ENCODE measurements at regions of chr10 and their contacts with region 1.

Region 1: DNA sequence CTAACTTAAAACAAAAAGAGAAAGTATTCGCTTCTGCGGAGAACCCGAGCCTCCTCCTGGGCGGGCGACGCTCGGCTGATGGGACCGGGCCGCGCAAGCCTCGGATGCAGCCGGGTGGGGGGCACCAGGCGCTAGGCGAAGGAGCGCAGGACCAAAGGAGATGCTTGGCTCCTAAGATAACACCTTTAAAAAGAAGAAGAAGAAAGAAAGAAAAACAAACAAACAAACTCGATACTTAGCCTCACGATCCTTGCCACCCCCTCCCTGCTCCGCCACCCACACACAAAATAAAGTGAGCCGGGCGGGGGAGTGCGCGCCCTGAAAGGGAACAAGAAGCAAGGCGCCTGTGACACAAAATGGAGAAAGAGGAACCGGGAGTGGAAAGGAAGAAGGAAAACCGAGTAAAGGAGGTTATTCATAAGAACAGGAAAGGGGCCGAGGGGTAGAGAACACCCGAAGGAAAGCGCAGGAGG is 34.0 kb upstream of the EBLN1 start:
- DNase-seq: peak in 8 of 9 donors; percentile 48 to 76 (median 73)
- ATAC-seq: peak; percentile 73
- H3K4me3 ChIP-seq: peak overlapping the region; percentile 82
- H3K4me3 Mint-ChIP-seq: peak overlapping the region; percentile 90 to 100 (median 94)
- H3K27ac ChIP-seq: peak overlapping the region; percentile 87
- H3K27ac Mint-ChIP-seq: peak overlapping the region; percentile 95 to 100 (median 99)
- H3K4me1 ChIP-seq: peaks cover 0 to 4% of the 10 kb centered on the region in 2 donors
- H3K4me1 Mint-ChIP-seq: peaks cover 8 to 40% (median 38%) of the 10 kb centered on the region in 7 donors
- H3K27me3 ChIP-seq: no peaks in the 10 kb centered on the region
- H3K27me3 Mint-ChIP-seq: peaks cover 8 to 31% (median 10%) of the 10 kb centered on the region in 5 donors

Region 2: DNA sequence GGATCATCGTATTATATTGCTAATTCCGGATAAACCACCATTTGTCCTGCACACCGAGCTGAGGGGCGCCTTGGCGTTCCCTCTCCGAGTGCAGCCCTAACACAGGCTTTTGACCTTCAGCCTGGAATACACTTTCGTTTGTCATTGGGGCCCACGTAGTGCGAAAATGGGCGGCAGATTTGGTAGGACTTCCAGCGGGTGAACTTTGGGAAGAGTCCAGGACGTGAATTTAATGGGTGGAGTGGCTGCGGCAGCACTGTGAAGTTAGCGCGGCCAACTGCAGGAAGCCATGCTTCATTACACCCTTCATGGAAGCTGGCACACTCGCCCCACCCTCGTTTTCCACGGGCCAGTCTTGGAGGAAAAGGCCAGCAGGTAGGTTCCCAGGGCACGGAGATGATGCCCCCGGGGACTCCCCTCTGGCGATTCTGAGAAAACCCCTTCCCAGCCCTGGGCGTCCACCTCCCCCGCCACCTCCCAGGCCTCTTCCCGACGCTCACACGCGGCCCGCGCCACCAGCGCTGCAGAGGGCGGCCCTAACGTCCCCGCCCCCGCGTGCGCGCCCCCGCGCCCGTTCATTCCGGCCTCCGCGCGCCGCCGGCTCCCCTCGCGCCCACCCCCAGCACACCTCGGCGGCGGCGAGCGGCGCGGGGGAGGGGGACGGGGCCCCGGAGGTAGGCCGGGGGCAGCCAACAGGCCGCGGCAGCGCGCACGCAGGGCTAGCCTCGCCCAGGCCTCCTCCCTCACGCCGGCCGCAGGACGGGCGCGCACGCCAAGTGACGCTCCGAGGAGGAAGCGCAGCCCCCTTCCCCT is 718.1 kb before region 1 on chr10 and contains the start of gene MLLT10:
- CTCF ChIA-PET with region 1: no interaction called
- POLR2A ChIA-PET with region 1: interaction called, 3 read pairs
- intact Hi-C with region 1: loop called (anchors 2 to 10 kb)
- DNase-seq: peak; percentile 90 to 96 (median 94)
- ATAC-seq: peak; percentile 95
- H3K4me3 ChIP-seq: peak within 1 kb of the TSS; percentile 81
- H3K4me3 Mint-ChIP-seq: peak within 1 kb of the TSS; percentile 90 to 98 (median 97)
- H3K27ac ChIP-seq: peak within 1 kb of the TSS; percentile 83
- H3K27ac Mint-ChIP-seq: peak within 1 kb of the TSS; percentile 91 to 98 (median 97)
- H3K4me1 ChIP-seq: peaks cover 8 to 15% of the 10 kb centered on the region in 2 donors
- H3K4me1 Mint-ChIP-seq: peaks cover 14 to 36% (median 27%) of the 10 kb centered on the region in 7 donors
- H3K27me3 ChIP-seq: no peaks in the 10 kb centered on the region
- H3K27me3 Mint-ChIP-seq: peaks cover 0 to 18% (median 0%) of the 10 kb centered on the region in 5 donors
- total RNA-seq, gene MLLT10: 50.0 to 74.2 (median 67.9) TPM

Region 3: DNA sequence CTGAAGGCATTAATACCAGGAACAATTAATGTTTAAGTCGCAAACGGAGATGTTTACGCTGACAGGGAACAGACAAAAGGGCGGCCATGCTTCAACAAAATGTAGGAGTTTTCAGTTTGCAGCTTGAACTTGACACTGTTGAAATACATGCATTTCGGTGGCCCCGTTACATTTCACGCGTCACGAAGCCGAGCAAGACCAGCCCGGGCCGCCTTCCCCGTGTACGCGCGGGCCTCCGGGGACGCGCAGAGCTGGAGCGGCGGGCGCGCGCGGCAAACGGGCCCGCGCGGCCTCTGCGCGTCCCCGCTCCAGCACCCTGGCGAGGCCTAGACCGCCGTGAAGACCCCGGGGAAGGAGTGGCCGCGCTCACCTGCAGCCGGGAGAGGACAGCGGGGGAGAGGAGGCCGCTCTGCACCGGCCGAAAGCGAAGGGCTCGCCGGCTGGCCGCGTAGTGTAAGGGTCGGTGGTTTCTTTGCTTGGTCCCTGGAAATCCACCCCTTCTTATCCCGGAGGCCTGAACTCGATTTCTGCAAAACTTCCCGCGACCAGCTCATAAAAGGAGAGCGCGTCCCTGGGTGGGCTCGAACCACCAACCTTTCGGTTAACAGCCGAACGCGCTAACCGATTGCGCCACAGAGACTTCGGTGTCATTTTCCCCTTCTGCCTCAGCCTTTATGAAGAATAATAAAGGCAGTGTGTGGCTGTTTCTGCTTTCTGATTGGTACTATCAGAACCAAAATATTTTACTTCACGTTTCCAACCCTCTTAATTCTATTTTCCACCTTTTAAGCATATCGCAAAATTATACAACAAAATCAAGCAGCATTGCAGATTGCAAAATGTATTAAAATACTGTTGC is 22.6 kb before region 1 on chr10:
- CTCF ChIA-PET with region 1: no interaction called
- POLR2A ChIA-PET with region 1: interaction called, 45 read pairs
- intact Hi-C with region 1: loop called (anchors 1 kb)
- DNase-seq: peak; percentile 74 to 94 (median 92)
- ATAC-seq: peak; percentile 95
- H3K4me3 ChIP-seq: peak overlapping the region; percentile 85
- H3K4me3 Mint-ChIP-seq: peak overlapping the region; percentile 84 to 99 (median 94)
- H3K27ac ChIP-seq: peak overlapping the region; percentile 70
- H3K27ac Mint-ChIP-seq: peak overlapping the region; percentile 96 to 100 (median 99)
- H3K4me1 ChIP-seq: peaks cover 6 to 8% of the 10 kb centered on the region in 2 donors
- H3K4me1 Mint-ChIP-seq: peaks cover 11 to 27% (median 15%) of the 10 kb centered on the region in 7 donors
- H3K27me3 ChIP-seq: no peaks in the 10 kb centered on the region
- H3K27me3 Mint-ChIP-seq: peaks cover 0 to 20% (median 5%) of the 10 kb centered on the region in 5 donors

Region 4: GRCh38 chr10:22335173-22336123 is 83.7 kb after region 1 on chr10:
- CTCF ChIA-PET with region 1: no interaction called
- POLR2A ChIA-PET with region 1: interaction called, 5 read pairs
- intact Hi-C with region 1: loop called (anchors 1 kb)
- DNase-seq: peak; percentile 51 to 83 (median 77)
- ATAC-seq: peak; percentile 90
- H3K4me3 ChIP-seq: peak overlapping the region; percentile 57
- H3K4me3 Mint-ChIP-seq: peak overlapping the region; percentile 82 to 91 (median 87)
- H3K27ac ChIP-seq: peak overlapping the region; percentile 63
- H3K27ac Mint-ChIP-seq: peak overlapping the region; percentile 84 to 95 (median 92)
- H3K4me1 ChIP-seq: peaks cover 37 to 38% of the 10 kb centered on the region in 2 donors
- H3K4me1 Mint-ChIP-seq: peaks cover 7 to 55% (median 35%) of the 10 kb centered on the region in 7 donors
- H3K27me3 ChIP-seq: peaks cover 25 to 47% of the 10 kb centered on the region in 2 donors
- H3K27me3 Mint-ChIP-seq: peaks cover 30 to 57% (median 52%) of the 10 kb centered on the region in 5 donors

Region 5: DNA sequence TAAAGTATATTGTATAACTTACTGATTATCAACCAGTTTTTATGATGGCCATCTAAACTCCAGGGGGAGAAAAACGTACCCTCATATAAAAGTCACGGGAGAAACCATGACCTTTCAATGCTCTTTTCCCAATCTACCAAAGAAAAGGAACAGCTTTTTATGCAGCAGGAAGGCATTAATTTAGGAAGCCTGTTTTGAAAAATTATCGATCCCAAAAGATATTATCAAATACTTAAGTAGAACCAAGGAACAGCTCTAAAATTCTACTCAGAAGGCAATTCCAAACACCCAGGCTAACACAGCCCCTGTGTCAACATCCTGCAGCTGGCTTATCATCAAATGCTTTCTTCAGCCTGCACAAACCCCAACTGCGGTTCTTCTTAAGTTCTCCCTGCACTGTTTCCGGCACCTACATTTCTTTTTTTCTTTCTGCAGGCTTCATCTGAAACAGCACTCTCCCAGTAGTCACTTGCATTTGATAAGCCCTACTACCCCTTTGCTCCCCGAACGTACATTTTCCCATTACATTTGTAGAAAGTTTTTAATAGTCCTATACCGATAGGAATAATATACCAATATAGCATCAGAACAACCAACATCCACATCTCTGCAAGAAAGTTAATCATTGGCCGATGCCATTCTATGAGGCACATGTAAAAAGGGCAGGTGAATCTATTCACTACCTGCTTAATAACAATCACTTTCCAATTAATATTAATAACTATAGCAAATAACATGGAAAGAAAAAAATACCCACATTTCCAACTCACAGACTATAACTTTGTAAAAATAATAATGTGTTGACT is 414.7 kb after region 1 on chr10:
- CTCF ChIA-PET with region 1: no interaction called
- POLR2A ChIA-PET with region 1: no interaction called
- intact Hi-C with region 1: loop called in 1 of 2 experiments (anchors 10 kb)
- DNase-seq: peak in 8 of 9 donors; percentile 49 to 91 (median 86)
- ATAC-seq: peak; percentile 96
- H3K4me3 ChIP-seq: peak overlapping the region; percentile 57
- H3K4me3 Mint-ChIP-seq: peak overlapping the region; percentile 78 to 97 (median 84)
- H3K27ac ChIP-seq: peak overlapping the region; percentile 59
- H3K27ac Mint-ChIP-seq: peak overlapping the region; percentile 74 to 97 (median 92)
- H3K4me1 ChIP-seq: peaks cover 68 to 75% of the 10 kb centered on the region in 2 donors
- H3K4me1 Mint-ChIP-seq: peaks cover 34 to 96% (median 89%) of the 10 kb centered on the region in 7 donors
- H3K27me3 ChIP-seq: no peaks in the 10 kb centered on the region
- H3K27me3 Mint-ChIP-seq: no peaks in the 10 kb centered on the region